ENCODE measurements at regions of chr12 and their contacts with region 1.

Region 1: GRCh38 chr12:39145175-39145999 is 240.0 kb upstream of the CPNE8 start:
- DNase-seq: peak; percentile 76
- H3K4me3 ChIP-seq: peak overlapping the region; percentile 40 to 74 (median 65)
- H3K27ac ChIP-seq: peak overlapping the region in 2 of 4 donors; percentile 62 to 65
- H3K4me1 ChIP-seq: peaks cover 0 to 8% (median 6%) of the 10 kb centered on the region in 4 donors
- H3K27me3 ChIP-seq: peaks cover 0 to 32% (median 0%) of the 10 kb centered on the region in 3 donors
- CTCF ChIP-seq: peak; percentile 36 to 86 (median 52)
- EP300 ChIP-seq: no peak
- POLR2A ChIP-seq: no peak

Region 2: DNA sequence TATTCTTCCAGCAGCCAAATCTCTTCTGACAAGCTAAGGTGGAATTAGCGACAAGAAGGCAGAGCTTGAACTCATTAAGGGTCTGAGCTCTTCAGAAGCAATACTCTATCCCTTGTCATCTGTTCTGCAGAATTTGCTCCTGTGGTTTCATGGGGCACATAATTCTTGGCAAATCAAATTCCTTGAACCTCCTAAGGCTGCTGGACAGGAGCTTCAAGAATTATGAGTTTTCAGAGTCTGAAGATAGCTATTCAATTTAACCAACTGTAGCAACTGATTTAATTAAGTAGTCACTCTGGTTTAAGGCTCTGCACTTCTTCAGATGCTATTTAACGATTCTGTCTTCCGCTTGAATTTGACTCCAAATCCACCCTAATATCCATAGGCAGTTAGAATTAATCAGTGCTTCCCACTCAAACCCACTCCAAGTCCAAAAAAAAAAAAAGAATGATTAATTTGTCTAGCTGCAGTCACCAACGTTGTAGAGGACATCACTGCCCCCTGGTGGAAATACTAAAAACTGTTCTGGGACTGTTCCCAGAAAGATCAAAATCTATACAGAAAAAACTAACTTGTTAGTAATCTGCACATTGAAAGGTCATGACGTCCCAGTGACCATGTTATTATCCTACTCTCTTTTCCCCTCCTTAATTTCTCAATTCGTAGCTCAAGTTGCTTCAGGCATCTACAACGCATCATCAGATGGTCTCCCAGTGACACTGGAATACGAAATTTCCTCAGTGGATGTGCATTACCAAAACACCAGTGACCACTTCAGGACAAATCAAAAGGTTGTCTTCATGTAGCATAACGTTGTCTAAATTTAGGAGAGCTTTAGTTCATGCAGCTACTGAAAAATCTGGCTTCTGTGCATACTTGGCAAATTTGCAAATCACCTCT is 127.7 kb after region 1 on chr12:
- intact Hi-C with region 1: loop called (anchors 1 kb)
- DNase-seq: no peak
- H3K4me3 ChIP-seq: no peak overlapping the region
- H3K27ac ChIP-seq: no peak overlapping the region
- H3K4me1 ChIP-seq: no peaks in the 10 kb centered on the region
- H3K27me3 ChIP-seq: no peaks in the 10 kb centered on the region
- CTCF ChIP-seq: peak in 1 of 4 experiments; percentile 66
- EP300 ChIP-seq: no peak
- POLR2A ChIP-seq: no peak

Region 3: GRCh38 chr12:39958377-39958776 is 813.0 kb after region 1 on chr12:
- intact Hi-C with region 1: no loop called
- DNase-seq: no peak
- H3K4me3 ChIP-seq: no peak overlapping the region
- H3K27ac ChIP-seq: no peak overlapping the region
- H3K4me1 ChIP-seq: no peaks in the 10 kb centered on the region
- H3K27me3 ChIP-seq: no peaks in the 10 kb centered on the region
- CTCF ChIP-seq: no peak
- EP300 ChIP-seq: no peak
- POLR2A ChIP-seq: no peak

Measured in sigmoid colon (tissue), 7 donors.